RWPE1 (cell line): ENCODE measurements at regions of chr11 and their contacts with region 1.

Region 1: GRCh38 chr11:70068345-70069027 is 9.6 kb upstream of the ANO1 start:
- DNase-seq: no peak
- H3K27ac ChIP-seq: no peak overlapping the region
- CTCF ChIP-seq: no peak

Region 2: GRCh38 chr11:70111269-70112016 is 43.0 kb after region 1 on chr11:
- CTCF ChIA-PET with region 1: no interaction called
- POLR2A ChIA-PET with region 1: no interaction called
- DNase-seq: no peak
- H3K27ac ChIP-seq: no peak overlapping the region
- CTCF ChIP-seq: no peak

Region 3: DNA sequence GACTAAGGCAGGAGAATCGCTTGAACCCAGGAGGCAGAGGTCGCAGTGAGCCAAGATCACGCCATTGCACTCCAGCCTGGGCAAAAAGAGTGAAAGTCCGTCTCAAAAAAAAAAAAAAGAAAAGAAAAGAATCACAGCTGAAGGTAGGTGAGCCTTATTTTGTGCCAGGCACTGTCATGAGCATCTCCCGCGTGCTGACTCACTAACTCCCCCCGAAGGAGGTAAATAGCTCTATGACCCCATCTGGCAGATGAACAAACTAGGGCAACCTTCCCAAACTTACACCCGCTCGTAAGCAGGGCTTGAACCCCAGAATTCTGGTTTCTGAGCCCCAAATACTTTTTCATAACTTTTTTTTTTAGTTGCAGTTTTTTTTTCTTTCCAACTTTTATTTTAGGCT is 69.9 kb after region 1 on chr11:
- CTCF ChIA-PET with region 1: interaction called, 11 read pairs
- POLR2A ChIA-PET with region 1: no interaction called
- DNase-seq: no peak
- H3K27ac ChIP-seq: no peak overlapping the region
- CTCF ChIP-seq: no peak